Ascending aorta (tissue), 2 donors: ENCODE measurements at regions of chr9 and their contacts with region 1.

Region 1: DNA sequence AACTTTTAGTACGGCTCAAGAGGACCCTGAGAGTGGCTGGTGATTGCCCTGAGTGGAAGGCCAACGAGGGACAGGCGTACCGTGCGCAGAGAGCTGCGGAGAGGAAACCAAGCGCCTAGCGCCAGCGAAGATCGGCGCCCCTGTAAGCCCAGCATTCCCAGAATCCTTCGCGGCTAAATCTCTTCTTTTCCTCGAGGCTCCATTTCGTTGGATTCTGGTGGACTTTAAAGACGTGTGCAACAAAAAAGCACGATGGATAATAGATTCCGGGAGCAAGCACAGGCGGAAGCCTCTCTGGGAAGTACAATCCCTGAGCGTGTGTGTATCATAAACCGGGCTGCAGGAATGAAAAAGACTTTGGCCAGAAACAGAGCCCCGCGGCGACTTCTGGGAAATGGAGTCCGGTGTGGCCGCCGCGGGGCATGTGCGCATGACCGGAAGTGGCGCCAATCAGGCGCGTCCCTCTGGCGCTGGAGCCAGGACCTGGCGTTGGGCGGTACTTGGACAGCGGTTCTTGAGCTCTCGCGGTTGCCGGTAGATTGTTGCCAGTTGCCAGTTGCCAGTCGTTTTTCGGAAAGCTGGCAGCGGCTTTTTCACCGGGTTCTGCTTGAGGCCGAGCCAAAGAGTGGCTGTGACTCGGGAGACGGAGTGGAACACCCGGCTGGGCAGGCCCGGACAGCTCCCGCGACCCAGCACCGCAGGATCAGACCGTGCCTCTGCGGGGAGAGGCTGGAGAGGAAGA is at the start of gene ZNF79:
- DNase-seq: peak; percentile 80 to 96
- H3K4me3 ChIP-seq: peak within 1 kb of the TSS; percentile 86
- H3K27ac ChIP-seq: peak within 1 kb of the TSS; percentile 79 to 91
- H3K4me1 ChIP-seq: peaks cover 7 to 28% of the 10 kb centered on the region in 2 donors
- H3K27me3 ChIP-seq: no peaks in the 10 kb centered on the region
- CTCF ChIP-seq: no peak
- total RNA-seq, gene ZNF79: 2.9 TPM

Region 2: DNA sequence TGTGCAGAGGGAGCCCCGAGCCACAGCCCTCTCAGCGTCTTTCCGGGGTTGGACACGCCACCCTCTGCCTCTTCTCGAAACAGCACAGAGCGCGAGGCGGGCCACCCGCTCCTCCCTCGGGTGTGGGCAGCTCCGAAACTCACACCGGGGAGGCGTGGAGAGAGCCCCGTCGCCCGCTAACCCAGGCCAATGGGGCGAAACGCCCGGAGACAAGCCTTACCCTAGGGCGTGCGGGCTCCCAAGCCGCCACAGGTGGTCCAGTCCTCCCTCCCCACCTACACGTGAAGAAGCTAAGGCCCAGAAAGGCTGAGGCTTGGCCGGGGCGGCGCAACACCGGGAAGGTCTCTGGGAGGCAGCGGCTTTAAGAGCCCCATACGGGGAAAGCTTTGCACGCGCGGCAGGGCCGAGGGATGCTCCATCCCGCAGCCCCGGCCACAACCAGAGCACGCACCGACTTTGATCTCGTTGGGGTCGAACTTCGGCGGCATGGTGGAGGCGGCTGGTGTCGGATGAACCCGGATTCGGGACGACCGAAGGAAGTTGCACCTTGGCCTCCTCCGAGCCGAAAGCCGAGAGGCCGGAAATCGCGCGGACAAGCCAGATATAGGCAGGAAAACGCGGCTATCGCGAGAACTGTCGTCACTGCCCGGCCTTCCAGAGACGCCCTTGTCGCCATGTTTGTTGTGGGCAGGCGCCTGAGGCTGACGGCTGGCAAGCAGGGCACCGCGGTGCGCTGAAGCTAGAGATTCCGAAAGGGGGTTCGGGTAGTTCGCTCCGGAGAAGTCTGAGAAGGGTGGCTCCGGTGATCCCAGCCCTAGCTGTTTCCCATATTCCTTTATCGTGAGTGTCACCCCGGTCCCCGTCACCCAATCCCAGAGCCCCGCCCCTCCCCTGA is 27.0 kb after region 1 on chr9 and contains the starts of genes LRSAM1 and RPL12:
- intact Hi-C with region 1: loop called (anchors 1 kb)
- DNase-seq: peak; percentile 79 to 97
- H3K4me3 ChIP-seq: peak within 1 kb of the TSS; percentile 75 to 82
- H3K27ac ChIP-seq: peak within 1 kb of the TSS; percentile 91 to 94
- H3K4me1 ChIP-seq: peaks cover 9 to 20% of the 10 kb centered on the region in 2 donors
- H3K27me3 ChIP-seq: no peaks in the 10 kb centered on the region
- CTCF ChIP-seq: no peak
- total RNA-seq, gene LRSAM1: 22.8 TPM
- total RNA-seq, gene RPL12: 1,924 TPM